MCF 10A (cell line): ENCODE measurements at regions of chr6 and their contacts with region 1.

Region 1: GRCh38 chr6:117976030-117976651 is 69.1 kb downstream of the SLC35F1 start:
- DNase-seq: peak; percentile 65
- H3K4me3 Mint-ChIP-seq: no peak overlapping the region
- H3K27ac Mint-ChIP-seq: no peak overlapping the region
- H3K4me1 Mint-ChIP-seq: no peaks in the 10 kb centered on the region
- H3K27me3 Mint-ChIP-seq: peaks cover 26% of the 10 kb centered on the region
- CTCF ChIP-seq: peak; percentile 40

Region 2: DNA sequence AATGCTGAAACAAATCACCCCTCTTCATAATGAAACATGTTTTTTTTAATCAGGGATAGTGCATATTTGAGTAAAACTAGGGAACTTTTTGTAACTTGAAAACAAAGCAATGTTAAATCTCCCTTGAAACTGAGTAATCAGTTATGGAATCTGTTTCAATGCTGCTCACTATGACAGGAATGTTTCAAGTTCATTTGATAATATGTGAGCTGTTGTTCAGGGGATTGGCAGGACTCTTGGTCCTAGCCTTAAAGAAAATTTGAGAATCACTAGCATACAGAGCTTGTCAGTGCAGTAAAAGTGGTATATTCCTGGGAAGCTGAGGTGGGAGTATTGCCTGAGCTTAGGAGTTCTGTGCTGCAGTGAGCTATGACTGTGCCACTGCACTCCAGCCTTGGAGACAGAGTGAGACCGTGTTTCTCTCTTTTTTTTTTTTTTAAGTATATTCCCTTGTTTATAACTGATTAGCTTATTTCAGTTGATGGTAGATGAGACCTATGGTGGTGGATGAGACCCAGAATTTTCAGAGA is 1536.6 kb before region 1 on chr6:
- CTCF ChIA-PET with region 1: no interaction called
- POLR2A ChIA-PET with region 1: no interaction called
- intact Hi-C with region 1: no loop called
- DNase-seq: no peak
- H3K4me3 Mint-ChIP-seq: no peak overlapping the region
- H3K27ac Mint-ChIP-seq: no peak overlapping the region
- H3K4me1 Mint-ChIP-seq: peaks cover 8% of the 10 kb centered on the region
- H3K27me3 Mint-ChIP-seq: no peaks in the 10 kb centered on the region
- CTCF ChIP-seq: no peak

Region 3: DNA sequence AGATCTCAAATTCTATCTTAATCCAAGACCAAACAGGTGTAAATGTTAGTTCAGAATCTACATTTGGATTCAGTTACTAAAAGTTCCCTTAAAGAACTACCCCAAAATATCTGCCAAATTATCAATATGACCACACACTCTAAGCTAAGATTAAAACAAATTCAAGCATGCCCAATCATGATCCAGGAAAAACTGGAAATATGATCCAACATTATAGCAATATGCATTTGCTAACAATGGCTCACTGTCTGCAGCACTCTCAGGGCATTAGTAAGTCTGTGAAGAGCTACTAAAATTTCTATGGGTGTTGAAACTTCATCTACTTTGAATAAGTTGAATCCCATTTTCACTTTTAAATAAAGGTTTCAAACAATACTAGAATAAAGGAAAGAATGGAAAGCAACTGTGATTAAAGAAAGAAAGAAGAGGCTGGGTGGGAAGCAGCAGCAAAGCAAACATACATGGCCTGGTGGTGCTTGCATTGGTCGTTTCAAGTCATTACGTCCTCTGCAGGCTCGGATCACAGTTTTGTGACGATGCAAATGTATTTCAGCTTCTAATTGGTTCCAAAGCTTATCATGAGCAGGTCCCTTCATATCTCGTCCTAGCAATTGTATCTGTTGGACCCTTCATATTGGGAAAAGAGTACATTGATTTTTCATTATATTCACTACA is 403.0 kb before region 1 on chr6:
- CTCF ChIA-PET with region 1: no interaction called
- POLR2A ChIA-PET with region 1: no interaction called
- intact Hi-C with region 1: no loop called
- DNase-seq: no peak
- H3K4me3 Mint-ChIP-seq: no peak overlapping the region
- H3K27ac Mint-ChIP-seq: no peak overlapping the region
- H3K4me1 Mint-ChIP-seq: peaks cover 13% of the 10 kb centered on the region
- H3K27me3 Mint-ChIP-seq: no peaks in the 10 kb centered on the region
- CTCF ChIP-seq: no peak

Region 4: GRCh38 chr6:118263921-118264486 is 287.9 kb after region 1 on chr6:
- CTCF ChIA-PET with region 1: interaction called, 9 read pairs
- POLR2A ChIA-PET with region 1: no interaction called
- intact Hi-C with region 1: loop called (anchors 1 kb)
- DNase-seq: peak; percentile 53
- H3K4me3 Mint-ChIP-seq: no peak overlapping the region
- H3K27ac Mint-ChIP-seq: no peak overlapping the region
- H3K4me1 Mint-ChIP-seq: no peaks in the 10 kb centered on the region
- H3K27me3 Mint-ChIP-seq: no peaks in the 10 kb centered on the region
- CTCF ChIP-seq: peak; percentile 33

Region 5: GRCh38 chr6:118509009-118509617 is 533.0 kb after region 1 on chr6:
- CTCF ChIA-PET with region 1: interaction called, 5 read pairs
- POLR2A ChIA-PET with region 1: no interaction called
- intact Hi-C with region 1: loop called (anchors 2 kb)
- DNase-seq: peak; percentile 43
- H3K4me3 Mint-ChIP-seq: no peak overlapping the region
- H3K27ac Mint-ChIP-seq: no peak overlapping the region
- H3K4me1 Mint-ChIP-seq: no peaks in the 10 kb centered on the region
- H3K27me3 Mint-ChIP-seq: no peaks in the 10 kb centered on the region
- CTCF ChIP-seq: peak; percentile 63

Region 6: DNA sequence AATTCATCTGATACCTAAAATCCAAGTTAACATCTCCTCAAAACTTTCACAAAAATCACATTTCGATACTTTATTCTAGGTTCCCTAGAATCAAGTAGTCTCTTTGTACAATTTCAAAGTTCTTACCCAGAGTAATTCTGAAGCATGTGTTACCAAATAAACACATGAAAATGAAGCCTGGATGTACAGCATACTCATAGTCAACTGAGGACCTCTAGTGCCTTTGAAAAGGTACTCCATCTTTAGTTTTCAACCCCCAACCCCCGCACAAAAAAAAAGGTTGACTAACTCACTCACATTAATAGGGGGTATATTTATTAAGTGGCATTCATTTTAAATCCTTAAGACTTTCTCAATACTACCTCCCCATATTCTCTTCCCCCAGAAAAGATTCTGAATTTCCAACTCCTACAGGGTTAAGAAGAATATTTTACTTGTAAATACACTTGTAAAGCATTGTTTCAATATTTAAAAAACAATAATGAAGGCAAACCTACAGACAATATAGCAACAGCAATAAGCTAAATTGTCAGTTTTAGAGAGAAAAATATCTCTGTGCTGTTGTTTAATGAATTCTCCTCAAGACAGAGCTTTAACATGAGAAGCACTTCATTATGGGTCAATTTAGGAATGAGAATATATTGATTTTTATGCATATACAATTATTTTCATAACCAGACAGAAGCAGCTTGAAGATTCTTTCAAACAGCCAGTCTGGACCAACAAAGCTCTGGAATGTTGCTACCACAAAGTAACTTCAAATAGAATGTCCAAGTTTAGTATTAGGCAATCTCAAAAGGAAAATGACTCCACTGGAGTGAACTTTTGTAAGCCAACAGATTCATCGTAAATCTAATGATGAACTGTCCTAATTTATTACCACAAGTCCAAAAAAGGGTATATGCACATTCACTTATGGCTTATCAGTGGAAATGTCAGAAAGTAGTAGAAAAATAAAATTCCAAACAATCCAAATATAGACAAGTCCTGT is 575.2 kb after region 1 on chr6:
- CTCF ChIA-PET with region 1: interaction called, 3 read pairs
- POLR2A ChIA-PET with region 1: interaction called, 3 read pairs
- intact Hi-C with region 1: loop called (anchors 5 kb)
- DNase-seq: peak; percentile 56
- H3K4me3 Mint-ChIP-seq: no peak overlapping the region
- H3K27ac Mint-ChIP-seq: no peak overlapping the region
- H3K4me1 Mint-ChIP-seq: peaks cover 12% of the 10 kb centered on the region
- H3K27me3 Mint-ChIP-seq: no peaks in the 10 kb centered on the region
- CTCF ChIP-seq: peak; percentile 59

Region 7: DNA sequence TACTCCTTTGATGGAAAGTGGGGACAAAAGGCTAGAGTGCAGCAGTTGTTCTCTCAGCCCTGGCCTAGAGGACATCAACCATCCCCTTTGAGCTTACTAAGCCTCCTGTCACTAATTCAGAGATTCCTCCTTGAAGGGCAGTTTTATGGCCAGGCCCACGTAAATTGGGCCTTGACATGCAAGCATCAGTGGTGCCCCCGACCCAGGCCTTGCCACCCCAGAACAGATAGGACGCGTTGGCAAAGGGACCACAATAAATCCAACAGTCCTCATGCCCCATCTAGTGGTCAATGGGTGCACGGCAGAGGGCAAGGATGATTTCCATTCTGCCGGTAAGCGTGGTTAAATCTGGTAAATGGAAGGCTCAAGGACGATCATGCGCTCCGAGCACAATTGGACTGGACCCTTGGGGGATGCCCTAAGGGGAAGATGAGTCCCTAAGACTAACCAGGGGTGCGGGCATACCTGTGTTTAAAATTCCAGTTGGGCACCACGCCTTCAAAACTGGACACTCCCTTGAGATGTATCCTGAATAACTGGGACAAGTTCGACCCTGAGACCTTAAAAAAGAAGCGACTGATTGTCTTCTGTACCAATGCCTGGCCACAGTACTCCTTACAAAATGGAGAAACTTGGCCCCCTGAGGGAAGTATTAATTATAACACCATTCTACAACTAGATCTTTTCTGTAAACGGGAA is 642.7 kb after region 1 on chr6:
- CTCF ChIA-PET with region 1: no interaction called
- POLR2A ChIA-PET with region 1: no interaction called
- intact Hi-C with region 1: loop called (anchors 5 kb)
- DNase-seq: peak; percentile 67
- H3K4me3 Mint-ChIP-seq: no peak overlapping the region
- H3K27ac Mint-ChIP-seq: no peak overlapping the region
- H3K4me1 Mint-ChIP-seq: peaks cover 7% of the 10 kb centered on the region
- H3K27me3 Mint-ChIP-seq: no peaks in the 10 kb centered on the region
- CTCF ChIP-seq: peak; percentile 89